ENCODE measurements at regions of chr4 and their contacts with region 1.

Region 1: DNA sequence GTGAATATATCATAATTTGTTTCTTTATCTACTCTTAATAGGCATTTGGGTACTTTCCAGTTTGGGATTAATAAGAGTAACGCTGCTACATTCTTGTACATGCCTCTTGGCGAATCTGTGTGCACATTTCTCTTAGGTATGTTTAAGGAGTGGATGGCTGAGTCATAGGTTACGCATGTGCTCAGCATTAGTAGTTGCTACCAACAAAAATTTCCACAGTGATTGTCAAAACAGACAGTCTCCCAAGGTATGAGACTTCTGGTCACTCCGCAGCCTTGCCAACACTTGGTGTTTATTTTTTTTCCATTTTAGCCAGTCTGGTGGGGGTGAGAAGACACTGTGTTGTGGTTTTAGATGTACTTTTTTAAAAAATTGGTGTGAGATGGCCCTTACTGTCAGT is 44.6 kb downstream of the FGFBP1 start:
- DNase-seq: peak; percentile 52 to 92
- H3K4me3 ChIP-seq: no peak overlapping the region
- H3K27ac ChIP-seq: peak overlapping the region; percentile 61
- H3K4me1 ChIP-seq: peaks cover 22% of the 10 kb centered on the region
- H3K27me3 ChIP-seq: no peaks in the 10 kb centered on the region
- CTCF ChIP-seq: no peak

Region 2: DNA sequence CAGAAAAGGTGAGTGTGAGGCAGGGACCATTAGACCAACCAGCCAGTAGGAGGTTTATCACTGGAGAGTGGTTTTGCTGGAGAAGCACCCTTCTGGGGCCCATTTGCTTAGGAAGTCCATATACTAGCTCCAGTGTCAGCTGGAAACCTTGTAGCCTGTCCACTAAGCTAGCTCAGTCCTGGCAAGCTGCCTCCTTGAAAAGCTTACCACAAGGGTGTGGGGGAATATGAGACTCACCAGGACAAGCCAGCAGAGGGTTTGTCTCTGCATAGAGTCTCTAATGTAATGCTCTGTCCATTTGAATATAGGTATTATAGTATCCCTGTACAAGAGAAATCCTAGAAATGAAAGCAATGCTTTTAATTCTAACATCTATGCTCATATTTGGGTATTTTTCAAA is 325.1 kb before region 1 on chr4:
- CTCF ChIA-PET with region 1: no interaction called
- POLR2A ChIA-PET with region 1: no interaction called
- intact Hi-C with region 1: no loop called
- DNase-seq: no peak
- H3K4me3 ChIP-seq: no peak overlapping the region
- H3K27ac ChIP-seq: no peak overlapping the region
- H3K4me1 ChIP-seq: no peaks in the 10 kb centered on the region
- H3K27me3 ChIP-seq: no peaks in the 10 kb centered on the region
- CTCF ChIP-seq: no peak

Region 3: GRCh38 chr4:15920723-15921591 is 27.0 kb after region 1 on chr4:
- CTCF ChIA-PET with region 1: no interaction called
- POLR2A ChIA-PET with region 1: interaction called, 4 read pairs
- intact Hi-C with region 1: loop called (anchors 1 kb)
- DNase-seq: peak; percentile 87 to 92
- H3K4me3 ChIP-seq: no peak overlapping the region
- H3K27ac ChIP-seq: peak overlapping the region; percentile 90
- H3K4me1 ChIP-seq: peaks cover 47% of the 10 kb centered on the region
- H3K27me3 ChIP-seq: no peaks in the 10 kb centered on the region
- CTCF ChIP-seq: no peak

Measured in PC-9 (cell line).